ENCODE measurements at regions of chr2 and their contacts with region 1.

Region 1: DNA sequence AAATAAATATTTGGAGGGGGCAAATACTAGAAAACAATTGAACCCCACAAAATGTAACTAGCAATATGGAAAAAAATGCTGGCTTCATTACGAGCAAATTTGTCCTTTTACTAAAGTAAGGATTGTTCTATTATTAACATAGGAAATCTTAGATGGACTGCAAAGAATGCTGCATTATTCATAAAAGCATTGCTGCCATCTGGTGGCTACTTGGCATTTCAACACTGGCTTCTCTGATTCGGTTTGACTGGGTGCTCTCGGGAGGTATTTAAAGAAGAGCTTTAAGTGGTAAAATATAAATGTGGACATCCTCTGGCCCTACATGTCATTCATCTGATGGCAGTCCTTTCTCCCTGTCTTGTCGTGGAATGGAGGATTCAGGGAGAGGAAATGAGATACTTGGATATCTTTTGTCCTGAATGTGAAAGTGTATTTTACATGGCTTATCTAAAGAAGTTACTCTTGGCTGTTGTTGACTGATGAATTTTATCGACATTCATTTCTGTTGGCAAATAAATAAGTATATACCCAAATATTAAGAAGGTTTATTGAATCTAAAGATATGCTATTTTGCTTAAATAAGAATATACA is 130.2 kb downstream of the ARHGAP15 start:
- DNase-seq: peak; percentile 42 to 89 (median 72)
- ATAC-seq: peak; percentile 32
- H3K4me3 ChIP-seq: peak overlapping the region in 1 of 2 experiments; percentile 33
- H3K4me3 Mint-ChIP-seq: peak overlapping the region; percentile 74
- H3K27ac ChIP-seq: peak overlapping the region in 1 of 2 experiments; percentile 74
- H3K27ac Mint-ChIP-seq: peak overlapping the region; percentile 83
- H3K4me1 ChIP-seq: peaks cover 68% of the 10 kb centered on the region
- H3K4me1 Mint-ChIP-seq: peaks cover 77% of the 10 kb centered on the region
- H3K27me3 ChIP-seq: no peaks in the 10 kb centered on the region
- H3K27me3 Mint-ChIP-seq: no peaks in the 10 kb centered on the region
- CTCF ChIP-seq: peak; percentile 96

Region 2: DNA sequence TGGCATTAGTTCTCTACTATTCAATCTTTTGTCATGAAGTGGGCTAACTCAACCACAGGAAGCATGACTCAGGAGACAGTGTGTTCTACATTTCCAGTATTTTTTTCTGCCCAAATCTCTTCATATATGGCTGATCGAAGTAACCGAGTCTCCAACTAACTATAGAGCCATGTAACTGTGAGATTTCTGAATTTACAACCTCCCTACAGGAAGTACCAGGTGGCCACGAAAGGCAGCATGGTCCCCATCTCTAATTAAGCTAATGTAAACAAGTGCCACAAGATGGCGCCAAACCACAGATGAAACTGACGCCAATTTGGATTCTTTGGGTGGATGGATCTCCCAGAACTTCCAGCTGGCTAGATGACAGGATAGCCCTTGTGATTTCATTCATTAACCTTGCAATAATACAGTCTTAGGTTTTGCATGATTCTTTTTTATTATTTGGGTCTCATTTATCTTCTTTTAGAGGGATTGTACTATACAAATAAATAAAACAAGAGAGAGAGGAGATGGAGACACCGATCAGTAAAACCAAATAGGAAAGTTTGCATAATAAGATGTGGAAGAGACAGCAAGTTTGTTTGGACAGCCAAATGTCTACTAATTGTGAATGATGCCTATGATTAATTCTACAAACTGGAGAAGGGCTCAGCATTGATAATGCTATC is 148.6 kb before region 1 on chr2:
- CTCF ChIA-PET with region 1: interaction called, 102 read pairs
- POLR2A ChIA-PET with region 1: interaction called, 6 read pairs
- intact Hi-C with region 1: loop called (anchors 1 to 2 kb)
- DNase-seq: peak; percentile 16 to 87 (median 66)
- ATAC-seq: peak; percentile 88
- H3K4me3 ChIP-seq: no peak overlapping the region
- H3K4me3 Mint-ChIP-seq: no peak overlapping the region
- H3K27ac ChIP-seq: no peak overlapping the region
- H3K27ac Mint-ChIP-seq: peak overlapping the region; percentile 74
- H3K4me1 ChIP-seq: peaks cover 15% of the 10 kb centered on the region
- H3K4me1 Mint-ChIP-seq: peaks cover 24% of the 10 kb centered on the region
- H3K27me3 ChIP-seq: no peaks in the 10 kb centered on the region
- H3K27me3 Mint-ChIP-seq: no peaks in the 10 kb centered on the region
- CTCF ChIP-seq: peak; percentile 85

Region 3: GRCh38 chr2:143169105-143169504 is 90.4 kb before region 1 on chr2:
- CTCF ChIA-PET with region 1: interaction called, 137 read pairs
- POLR2A ChIA-PET with region 1: interaction called, 3 read pairs
- intact Hi-C with region 1: no loop called
- DNase-seq: no peak
- ATAC-seq: no peak
- H3K4me3 ChIP-seq: no peak overlapping the region
- H3K4me3 Mint-ChIP-seq: no peak overlapping the region
- H3K27ac ChIP-seq: no peak overlapping the region
- H3K27ac Mint-ChIP-seq: no peak overlapping the region
- H3K4me1 ChIP-seq: peaks cover 23% of the 10 kb centered on the region
- H3K4me1 Mint-ChIP-seq: peaks cover 83% of the 10 kb centered on the region
- H3K27me3 ChIP-seq: no peaks in the 10 kb centered on the region
- H3K27me3 Mint-ChIP-seq: no peaks in the 10 kb centered on the region
- CTCF ChIP-seq: no peak

Region 4: DNA sequence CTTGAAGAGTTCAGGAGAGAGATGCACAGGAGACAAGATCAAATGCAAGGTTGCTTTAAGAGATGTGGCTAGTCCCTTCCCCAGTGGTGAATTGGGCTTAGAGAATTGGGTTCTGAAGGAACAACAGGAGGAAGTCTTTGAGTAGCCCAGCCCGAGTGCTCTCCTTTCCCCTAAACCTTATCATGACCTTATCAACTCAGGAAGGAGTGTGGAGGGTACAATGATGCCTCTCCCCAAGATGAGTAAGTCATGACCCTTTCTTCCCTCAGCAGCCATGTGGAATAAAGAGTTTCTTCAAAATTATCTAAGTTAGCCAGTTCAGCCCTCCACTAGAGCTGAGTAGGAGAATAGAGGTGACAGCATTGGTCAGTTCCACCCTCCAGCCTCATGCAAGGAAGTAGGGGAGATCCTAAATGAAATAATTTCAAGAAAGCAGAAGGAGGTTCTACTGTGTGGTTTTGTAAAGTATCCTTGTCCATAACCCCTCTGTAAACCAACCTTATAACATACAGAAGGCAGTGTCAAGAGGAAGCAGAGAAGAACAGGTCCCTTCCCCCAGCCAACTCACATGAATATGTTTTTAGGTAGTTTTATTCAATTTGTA is 41.8 kb before region 1 on chr2:
- CTCF ChIA-PET with region 1: interaction called, 34 read pairs
- POLR2A ChIA-PET with region 1: interaction called, 3 read pairs
- intact Hi-C with region 1: loop called (anchors 1 to 2 kb)
- DNase-seq: no peak
- ATAC-seq: no peak
- H3K4me3 ChIP-seq: no peak overlapping the region
- H3K4me3 Mint-ChIP-seq: no peak overlapping the region
- H3K27ac ChIP-seq: peak overlapping the region in 1 of 2 experiments; percentile 36
- H3K27ac Mint-ChIP-seq: peak overlapping the region; percentile 79
- H3K4me1 ChIP-seq: peaks cover 7% of the 10 kb centered on the region
- H3K4me1 Mint-ChIP-seq: peaks cover 54% of the 10 kb centered on the region
- H3K27me3 ChIP-seq: no peaks in the 10 kb centered on the region
- H3K27me3 Mint-ChIP-seq: no peaks in the 10 kb centered on the region
- CTCF ChIP-seq: no peak

Region 5: GRCh38 chr2:143246815-143247744 is 12.4 kb before region 1 on chr2:
- CTCF ChIA-PET with region 1: interaction called, 28 read pairs
- POLR2A ChIA-PET with region 1: interaction called, 10 read pairs
- intact Hi-C with region 1: loop called in 1 of 2 experiments (anchors 1 kb)
- DNase-seq: peak in 6 of 9 experiments; percentile 16 to 68 (median 42)
- ATAC-seq: peak; percentile 60
- H3K4me3 ChIP-seq: peak overlapping the region; percentile 19 to 52
- H3K4me3 Mint-ChIP-seq: no peak overlapping the region
- H3K27ac ChIP-seq: peak overlapping the region; percentile 2 to 70
- H3K27ac Mint-ChIP-seq: no peak overlapping the region
- H3K4me1 ChIP-seq: peaks cover 28% of the 10 kb centered on the region
- H3K4me1 Mint-ChIP-seq: peaks cover 24% of the 10 kb centered on the region
- H3K27me3 ChIP-seq: no peaks in the 10 kb centered on the region
- H3K27me3 Mint-ChIP-seq: no peaks in the 10 kb centered on the region
- CTCF ChIP-seq: no peak